ENCODE measurements at regions of chr10 and their contacts with region 1.

Region 1: GRCh38 chr10:28532383-28533175 is at the start of gene WAC:
- DNase-seq: peak; percentile 83
- ATAC-seq: peak; percentile 91
- H3K4me3 ChIP-seq: peak within 1 kb of the TSS; percentile 63 to 97
- H3K27ac ChIP-seq: peak within 1 kb of the TSS; percentile 77
- H3K4me1 ChIP-seq: peaks cover 4 to 22% of the 10 kb centered on the region in 2 experiments; a peak in 3 of 4 replicates
- H3K27me3 ChIP-seq: no peaks in the 10 kb centered on the region
- CTCF ChIP-seq: no peak
- POLR2A ChIP-seq: no peak
- RAD21 ChIP-seq: no peak
- total RNA-seq, gene WAC: 117 TPM

Region 2: DNA sequence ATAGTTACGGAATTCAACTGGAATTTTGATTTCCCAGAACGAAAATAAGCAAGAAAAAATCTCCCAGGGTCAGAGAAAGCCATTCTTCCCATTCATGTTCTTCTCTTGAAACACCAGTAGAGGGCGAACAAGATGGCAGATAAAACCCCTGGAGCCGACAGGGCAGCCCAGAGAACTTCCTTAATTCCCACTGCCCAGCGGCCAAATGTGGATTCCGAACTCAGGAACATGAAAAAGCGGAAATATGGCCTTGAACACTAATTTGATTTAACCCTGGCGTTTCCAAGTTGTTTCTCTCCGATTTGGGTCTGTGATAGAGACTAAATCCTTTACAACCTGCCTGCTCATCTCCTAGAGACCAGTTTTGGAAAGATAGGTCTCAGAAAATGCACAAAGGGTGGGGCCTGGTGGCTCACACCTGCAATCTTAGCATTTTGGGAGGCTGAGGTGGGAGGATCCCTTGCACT is 100.3 kb before region 1 on chr10:
- CTCF ChIA-PET with region 1: no interaction called
- POLR2A ChIA-PET with region 1: no interaction called
- RAD21 ChIA-PET with region 1: interaction called in 1 of 2 experiments, 3 read pairs
- intact Hi-C with region 1: loop called (anchors 2 kb)
- DNase-seq: peak; percentile 70
- ATAC-seq: peak; percentile 93
- H3K4me3 ChIP-seq: peak overlapping the region in 1 of 2 experiments; percentile 34; a peak in 2 of 4 replicates
- H3K27ac ChIP-seq: no peak overlapping the region
- H3K4me1 ChIP-seq: peaks cover 0 to 7% of the 10 kb centered on the region in 2 experiments; a peak in 2 of 4 replicates
- H3K27me3 ChIP-seq: no peaks in the 10 kb centered on the region
- CTCF ChIP-seq: peak; percentile 67 to 83 (median 81)
- POLR2A ChIP-seq: no peak
- RAD21 ChIP-seq: peak; percentile 80

Region 3: DNA sequence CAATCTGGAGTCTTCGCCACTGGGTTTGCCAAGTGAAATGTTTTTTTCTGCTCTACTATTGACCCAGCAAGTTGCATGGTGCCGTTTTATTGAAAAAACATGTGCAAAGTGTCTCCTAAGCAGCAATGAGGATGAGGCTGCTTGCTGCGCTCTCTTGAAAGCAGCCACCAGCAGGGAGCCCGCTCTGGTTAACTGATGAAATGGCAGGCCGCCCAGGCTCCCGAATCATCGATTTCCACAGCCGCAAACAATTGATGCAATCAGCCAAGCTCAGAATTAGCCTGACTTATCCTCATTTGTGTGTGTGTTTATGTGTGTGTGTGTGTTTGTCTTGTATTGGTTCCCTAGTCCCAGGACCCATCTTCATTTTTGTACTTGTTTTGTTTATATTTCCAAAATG is 734.1 kb after region 1 on chr10:
- CTCF ChIA-PET with region 1: no interaction called
- POLR2A ChIA-PET with region 1: no interaction called
- RAD21 ChIA-PET with region 1: no interaction called
- intact Hi-C with region 1: no loop called
- DNase-seq: no peak
- ATAC-seq: no peak
- H3K4me3 ChIP-seq: no peak overlapping the region
- H3K27ac ChIP-seq: no peak overlapping the region
- H3K4me1 ChIP-seq: no peaks in the 10 kb centered on the region
- H3K27me3 ChIP-seq: no peaks in the 10 kb centered on the region
- CTCF ChIP-seq: no peak
- POLR2A ChIP-seq: no peak
- RAD21 ChIP-seq: no peak